ENCODE measurements at regions of chr2 and their contacts with region 1.

Region 1: DNA sequence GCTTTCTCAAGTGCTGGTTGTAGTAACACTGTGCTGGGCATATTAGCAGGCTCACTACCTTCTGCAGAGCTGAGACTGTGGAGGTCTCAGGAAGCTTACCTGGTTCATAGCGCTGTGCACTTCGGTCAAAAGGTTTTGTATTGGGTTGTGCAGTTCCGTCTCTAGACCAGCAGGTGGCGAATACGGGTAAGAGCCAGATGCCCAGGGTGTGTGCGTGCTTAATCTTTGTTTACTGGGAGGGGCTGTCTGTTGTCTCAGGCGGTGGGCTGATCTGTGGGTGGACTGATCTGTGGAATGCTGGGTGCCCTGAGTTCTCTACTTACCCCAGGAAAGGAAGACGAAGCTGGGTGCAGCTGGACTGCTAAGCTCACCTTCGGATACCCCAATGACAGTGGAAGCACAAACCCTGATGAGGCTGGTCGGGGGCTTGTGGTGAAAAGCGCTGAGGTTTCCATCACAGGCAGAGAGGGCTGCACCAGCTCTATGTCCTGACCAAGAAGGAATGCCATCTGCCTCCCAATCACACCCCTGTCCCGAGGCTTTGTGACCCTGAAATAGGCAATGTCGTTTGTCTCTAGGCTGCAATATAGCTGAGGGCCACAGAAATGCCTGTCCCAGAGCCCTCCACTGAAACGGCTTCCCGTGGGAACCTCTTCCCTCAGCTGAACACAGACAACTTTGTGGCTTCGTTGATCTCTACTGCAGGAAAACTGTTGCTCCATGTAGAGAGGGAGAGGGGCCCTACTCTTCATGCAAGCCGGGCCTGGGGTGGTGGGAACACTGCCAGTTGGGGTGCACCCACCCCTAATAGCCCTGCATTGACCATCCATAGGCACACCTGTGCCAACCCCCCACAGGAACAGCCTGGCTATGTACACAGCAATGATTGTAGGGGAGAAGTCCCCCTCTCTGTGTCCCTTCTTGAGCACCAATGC is 45.9 kb upstream of the FAM117B start:
- DNase-seq: peak; percentile 85
- ATAC-seq: peak; percentile 99
- H3K4me3 ChIP-seq: peak overlapping the region in 1 of 5 experiments; percentile 21
- H3K4me3 Mint-ChIP-seq: peak overlapping the region; percentile 50
- H3K27ac ChIP-seq: no peak overlapping the region
- H3K27ac Mint-ChIP-seq: peak overlapping the region; percentile 43
- H3K4me1 ChIP-seq: peaks cover 9 to 12% of the 10 kb centered on the region in 2 donors
- H3K4me1 Mint-ChIP-seq: peaks cover 24% of the 10 kb centered on the region
- H3K27me3 ChIP-seq: no peaks in the 10 kb centered on the region
- H3K27me3 Mint-ChIP-seq: no peaks in the 10 kb centered on the region
- CTCF ChIP-seq: peak; percentile 86

Region 2: DNA sequence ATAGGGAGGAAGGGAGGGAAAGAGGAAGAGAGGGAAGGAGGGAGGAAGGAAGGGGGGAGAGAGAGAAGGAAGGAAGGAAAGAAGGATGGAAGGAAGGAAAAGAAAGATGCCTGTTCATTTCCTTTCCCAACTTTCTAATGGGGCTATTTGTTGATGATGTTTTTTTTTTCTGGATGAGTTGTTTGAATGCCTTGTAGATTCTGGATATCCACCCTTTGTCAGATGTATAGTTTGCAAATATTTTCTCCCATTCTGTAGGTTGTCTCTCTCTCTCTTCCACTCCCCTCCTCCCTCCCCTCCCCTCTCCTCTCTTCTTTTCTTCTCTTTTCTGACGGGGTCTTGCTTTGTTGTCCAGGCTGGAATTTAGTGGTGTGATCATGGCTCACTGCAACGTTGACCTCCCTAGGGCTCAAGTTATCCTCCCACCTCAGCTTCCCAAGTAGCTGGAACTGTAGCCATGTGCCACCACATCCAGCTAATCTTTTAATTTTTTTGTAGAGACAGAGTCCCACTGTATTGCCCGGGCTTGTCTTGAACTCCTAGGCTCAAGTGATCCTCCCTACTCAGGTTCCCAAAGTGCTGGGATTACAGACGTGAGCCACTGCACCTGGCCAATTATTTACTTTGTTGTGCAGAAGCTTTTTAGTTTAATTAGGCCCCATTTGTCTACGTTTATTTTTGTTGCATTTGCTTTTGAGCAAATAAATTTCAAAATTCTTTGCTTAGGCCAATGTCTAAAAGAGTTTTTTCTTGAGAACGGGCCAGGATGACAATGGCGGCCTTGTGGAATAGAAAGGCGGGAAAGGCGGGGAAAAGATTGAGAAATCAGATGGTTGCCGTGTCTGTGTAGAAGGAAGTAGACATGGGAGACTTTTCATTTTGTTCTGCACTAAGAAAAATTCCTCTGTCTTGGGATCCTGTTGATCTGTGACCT is 11.4 kb before region 1 on chr2:
- CTCF ChIA-PET with region 1: interaction called, 19 read pairs
- POLR2A ChIA-PET with region 1: interaction called, 4 read pairs
- intact Hi-C with region 1: no loop called
- DNase-seq: no peak
- ATAC-seq: no peak
- H3K4me3 ChIP-seq: no peak overlapping the region
- H3K4me3 Mint-ChIP-seq: no peak overlapping the region
- H3K27ac ChIP-seq: no peak overlapping the region
- H3K27ac Mint-ChIP-seq: no peak overlapping the region
- H3K4me1 ChIP-seq: no peaks in the 10 kb centered on the region
- H3K4me1 Mint-ChIP-seq: no peaks in the 10 kb centered on the region
- H3K27me3 ChIP-seq: no peaks in the 10 kb centered on the region
- H3K27me3 Mint-ChIP-seq: no peaks in the 10 kb centered on the region
- CTCF ChIP-seq: no peak

Region 3: DNA sequence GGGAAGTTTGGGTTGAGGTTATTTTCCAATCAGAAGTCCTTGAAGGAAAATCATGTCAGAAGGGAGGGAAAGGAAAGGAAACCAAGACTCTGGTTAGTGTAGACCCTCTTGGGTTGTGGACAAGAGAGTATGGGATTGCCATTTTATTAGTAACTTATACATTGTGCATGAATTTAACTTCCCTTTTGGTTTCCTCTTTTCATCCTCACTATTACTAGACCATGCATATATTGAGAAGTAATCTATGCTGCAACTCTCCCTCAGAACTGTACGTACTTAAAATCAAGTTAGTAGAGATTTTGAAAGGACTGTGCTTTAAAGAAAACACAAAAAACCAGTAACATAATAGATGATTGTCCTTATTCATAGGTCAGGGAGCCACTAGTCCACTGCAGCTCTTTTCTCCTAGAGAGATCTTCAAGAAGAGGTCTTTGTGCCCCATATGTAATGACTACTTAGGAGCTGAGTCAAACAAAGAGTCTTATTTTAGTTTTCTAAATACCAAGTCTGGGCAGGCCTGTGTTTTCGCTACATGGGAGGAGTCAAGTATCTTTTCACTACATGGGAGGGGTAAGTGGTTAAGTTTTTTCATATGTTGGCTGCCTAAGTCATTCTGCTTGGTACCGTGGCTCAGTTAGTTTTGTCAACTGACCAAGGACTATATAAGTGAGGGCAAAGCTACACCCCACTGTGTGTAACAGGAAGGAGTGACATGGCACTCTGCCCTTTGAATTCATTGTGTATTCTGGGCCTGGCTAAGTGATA is 20.6 kb after region 1 on chr2:
- CTCF ChIA-PET with region 1: interaction called, 12 read pairs
- POLR2A ChIA-PET with region 1: no interaction called
- intact Hi-C with region 1: no loop called
- DNase-seq: peak; percentile 48
- ATAC-seq: peak; percentile 74
- H3K4me3 ChIP-seq: peak overlapping the region in 2 of 5 experiments; percentile 3 to 45
- H3K4me3 Mint-ChIP-seq: peak overlapping the region; percentile 58
- H3K27ac ChIP-seq: peak overlapping the region; percentile 58 to 79
- H3K27ac Mint-ChIP-seq: peak overlapping the region; percentile 90
- H3K4me1 ChIP-seq: peaks cover 30 to 32% of the 10 kb centered on the region in 2 donors
- H3K4me1 Mint-ChIP-seq: peaks cover 35% of the 10 kb centered on the region
- H3K27me3 ChIP-seq: no peaks in the 10 kb centered on the region
- H3K27me3 Mint-ChIP-seq: no peaks in the 10 kb centered on the region
- CTCF ChIP-seq: no peak

Region 4: GRCh38 chr2:202671317-202672035 is 82.6 kb after region 1 on chr2:
- CTCF ChIA-PET with region 1: interaction called, 15 read pairs
- POLR2A ChIA-PET with region 1: no interaction called
- intact Hi-C with region 1: no loop called
- DNase-seq: no peak
- ATAC-seq: no peak
- H3K4me3 ChIP-seq: peak overlapping the region in 1 of 5 experiments; percentile 27
- H3K4me3 Mint-ChIP-seq: peak overlapping the region; percentile 5
- H3K27ac ChIP-seq: peak overlapping the region; percentile 16 to 67
- H3K27ac Mint-ChIP-seq: peak overlapping the region; percentile 90
- H3K4me1 ChIP-seq: peaks cover 82 to 83% of the 10 kb centered on the region in 2 donors
- H3K4me1 Mint-ChIP-seq: peaks cover 77% of the 10 kb centered on the region
- H3K27me3 ChIP-seq: no peaks in the 10 kb centered on the region
- H3K27me3 Mint-ChIP-seq: no peaks in the 10 kb centered on the region
- CTCF ChIP-seq: no peak

Region 5: GRCh38 chr2:202703091-202703490 is 114.2 kb after region 1 on chr2:
- CTCF ChIA-PET with region 1: interaction called, 41 read pairs
- POLR2A ChIA-PET with region 1: no interaction called
- intact Hi-C with region 1: loop called (anchors 1 kb)
- DNase-seq: no peak
- ATAC-seq: no peak
- H3K4me3 ChIP-seq: no peak overlapping the region
- H3K4me3 Mint-ChIP-seq: no peak overlapping the region
- H3K27ac ChIP-seq: peak overlapping the region in 1 of 2 donors; percentile 12
- H3K27ac Mint-ChIP-seq: peak overlapping the region; percentile 3
- H3K4me1 ChIP-seq: peaks cover 13 to 26% of the 10 kb centered on the region in 2 donors
- H3K4me1 Mint-ChIP-seq: peaks cover 55% of the 10 kb centered on the region
- H3K27me3 ChIP-seq: no peaks in the 10 kb centered on the region
- H3K27me3 Mint-ChIP-seq: no peaks in the 10 kb centered on the region
- CTCF ChIP-seq: no peak

Region 6: GRCh38 chr2:202750763-202751427 is 162.0 kb after region 1 on chr2:
- CTCF ChIA-PET with region 1: interaction called, 14 read pairs
- POLR2A ChIA-PET with region 1: interaction called, 3 read pairs
- intact Hi-C with region 1: no loop called
- DNase-seq: peak; percentile 58
- ATAC-seq: peak; percentile 80
- H3K4me3 ChIP-seq: peak overlapping the region in 1 of 5 experiments; percentile 6
- H3K4me3 Mint-ChIP-seq: peak overlapping the region; percentile 67
- H3K27ac ChIP-seq: peak overlapping the region; percentile 74 to 87
- H3K27ac Mint-ChIP-seq: peak overlapping the region; percentile 85
- H3K4me1 ChIP-seq: peaks cover 14 to 19% of the 10 kb centered on the region in 2 donors
- H3K4me1 Mint-ChIP-seq: peaks cover 43% of the 10 kb centered on the region
- H3K27me3 ChIP-seq: no peaks in the 10 kb centered on the region
- H3K27me3 Mint-ChIP-seq: no peaks in the 10 kb centered on the region
- CTCF ChIP-seq: no peak

Region 7: DNA sequence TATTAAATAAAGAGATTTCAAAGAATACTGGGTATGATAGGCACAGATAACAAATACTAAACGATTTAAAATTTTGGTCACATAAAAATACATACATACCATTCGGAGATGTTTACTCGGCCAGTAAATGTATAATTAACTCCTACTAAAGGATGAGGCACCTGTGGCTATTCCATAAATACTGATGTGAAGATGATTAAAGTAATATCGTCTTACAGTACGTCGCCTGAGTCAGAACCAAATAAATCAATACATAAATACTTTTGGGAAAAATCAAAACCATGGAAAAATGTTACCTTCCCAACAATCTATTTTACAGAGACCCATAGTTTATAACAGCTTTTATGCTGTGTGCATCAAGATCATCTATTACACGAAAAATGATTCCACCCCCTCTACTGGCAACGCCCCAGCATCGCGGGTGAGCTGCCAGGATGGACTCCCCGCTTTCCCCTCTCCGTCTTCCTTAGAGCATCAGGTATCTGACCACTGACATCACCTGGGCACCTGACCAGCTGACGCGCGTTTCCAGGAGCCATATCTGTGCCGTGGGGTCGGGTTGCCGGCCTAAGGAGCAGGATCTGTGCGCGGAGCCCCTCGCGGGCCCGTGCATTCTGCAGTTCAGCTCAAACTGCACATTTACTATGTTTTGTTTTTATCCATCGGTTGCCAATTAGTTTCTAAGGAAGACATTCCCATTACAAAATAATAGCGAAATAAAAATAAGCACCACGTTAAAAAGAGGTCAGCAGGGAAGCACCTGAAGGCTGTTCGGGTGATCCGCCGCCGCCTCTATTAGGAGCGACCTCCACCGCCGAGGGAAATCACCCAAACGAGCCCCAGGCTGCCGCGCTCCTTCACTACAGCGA is 281.8 kb after region 1 on chr2:
- CTCF ChIA-PET with region 1: interaction called, 103 read pairs
- POLR2A ChIA-PET with region 1: no interaction called
- intact Hi-C with region 1: loop called (anchors 1 kb)
- DNase-seq: peak; percentile 75
- ATAC-seq: peak; percentile 77
- H3K4me3 ChIP-seq: peak overlapping the region; percentile 46 to 75 (median 71)
- H3K4me3 Mint-ChIP-seq: peak overlapping the region; percentile 96
- H3K27ac ChIP-seq: peak overlapping the region; percentile 35 to 65
- H3K27ac Mint-ChIP-seq: peak overlapping the region; percentile 86
- H3K4me1 ChIP-seq: peaks cover 0 to 4% of the 10 kb centered on the region in 2 donors
- H3K4me1 Mint-ChIP-seq: peaks cover 6% of the 10 kb centered on the region
- H3K27me3 ChIP-seq: no peaks in the 10 kb centered on the region
- H3K27me3 Mint-ChIP-seq: no peaks in the 10 kb centered on the region
- CTCF ChIP-seq: peak; percentile 83

Region 8: GRCh38 chr2:203246646-203247045 is 657.7 kb after region 1 on chr2:
- CTCF ChIA-PET with region 1: no interaction called
- POLR2A ChIA-PET with region 1: no interaction called
- intact Hi-C with region 1: no loop called
- DNase-seq: no peak
- ATAC-seq: no peak
- H3K4me3 ChIP-seq: no peak overlapping the region
- H3K4me3 Mint-ChIP-seq: no peak overlapping the region
- H3K27ac ChIP-seq: no peak overlapping the region
- H3K27ac Mint-ChIP-seq: no peak overlapping the region
- H3K4me1 ChIP-seq: peaks cover 5 to 8% of the 10 kb centered on the region in 2 donors
- H3K4me1 Mint-ChIP-seq: peaks cover 19% of the 10 kb centered on the region
- H3K27me3 ChIP-seq: no peaks in the 10 kb centered on the region
- H3K27me3 Mint-ChIP-seq: no peaks in the 10 kb centered on the region
- CTCF ChIP-seq: no peak